ENCODE measurements at regions of chr3 and their contacts with region 1.

Region 1: DNA sequence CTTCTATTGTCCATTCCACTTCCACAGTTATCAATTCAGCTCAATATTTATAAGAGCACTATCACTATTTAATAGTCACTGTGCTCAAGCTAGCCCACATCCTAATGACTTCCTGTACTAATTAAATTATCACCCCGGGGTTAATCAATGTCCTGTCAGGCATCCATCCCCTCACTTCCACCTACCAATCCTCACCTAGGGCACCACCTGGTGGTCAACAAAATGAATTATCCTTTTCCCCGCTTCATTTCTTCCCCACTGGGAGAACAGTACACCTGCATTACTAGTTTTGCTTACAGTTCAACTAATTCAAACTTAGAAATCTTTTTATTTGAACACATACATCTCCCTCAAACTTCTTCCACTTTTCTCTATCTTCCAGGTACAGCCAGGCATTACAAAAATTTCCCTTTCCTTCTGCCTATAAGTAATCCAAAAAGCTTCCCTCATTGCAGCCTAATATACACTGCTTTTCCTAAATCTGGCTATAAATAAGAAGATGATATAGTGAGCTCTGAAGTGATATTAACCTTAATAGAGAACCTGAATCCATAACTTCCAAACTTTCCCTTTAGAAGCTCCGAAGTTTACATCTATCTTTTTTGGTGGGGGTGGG is 68.5 kb downstream of the TMCC1 start:
- DNase-seq: peak in 1 of 2 donors; percentile 42
- ATAC-seq: peak in 2 of 8 donors; percentile 27 to 51
- H3K4me3 ChIP-seq: no peak overlapping the region
- H3K27ac ChIP-seq: no peak overlapping the region
- H3K4me1 ChIP-seq: peaks cover 0 to 48% (median 10%) of the 10 kb centered on the region in 9 donors
- H3K27me3 ChIP-seq: no peaks in the 10 kb centered on the region
- CTCF ChIP-seq: peak; percentile 37 to 80 (median 72)

Region 2: GRCh38 chr3:129343643-129344332 is 481.2 kb before region 1 on chr3:
- intact Hi-C with region 1: loop called in 1 of 10 experiments (anchors 5 kb)
- DNase-seq: peak in 1 of 2 donors; percentile 56
- ATAC-seq: peak; percentile 48 to 88 (median 78)
- H3K4me3 ChIP-seq: peak overlapping the region; percentile 7 to 47 (median 36)
- H3K27ac ChIP-seq: no peak overlapping the region
- H3K4me1 ChIP-seq: peaks cover 2 to 39% (median 24%) of the 10 kb centered on the region in 9 donors
- H3K27me3 ChIP-seq: peaks cover 0 to 11% (median 0%) of the 10 kb centered on the region in 7 donors
- CTCF ChIP-seq: peak; percentile 3 to 73 (median 58)

Region 3: DNA sequence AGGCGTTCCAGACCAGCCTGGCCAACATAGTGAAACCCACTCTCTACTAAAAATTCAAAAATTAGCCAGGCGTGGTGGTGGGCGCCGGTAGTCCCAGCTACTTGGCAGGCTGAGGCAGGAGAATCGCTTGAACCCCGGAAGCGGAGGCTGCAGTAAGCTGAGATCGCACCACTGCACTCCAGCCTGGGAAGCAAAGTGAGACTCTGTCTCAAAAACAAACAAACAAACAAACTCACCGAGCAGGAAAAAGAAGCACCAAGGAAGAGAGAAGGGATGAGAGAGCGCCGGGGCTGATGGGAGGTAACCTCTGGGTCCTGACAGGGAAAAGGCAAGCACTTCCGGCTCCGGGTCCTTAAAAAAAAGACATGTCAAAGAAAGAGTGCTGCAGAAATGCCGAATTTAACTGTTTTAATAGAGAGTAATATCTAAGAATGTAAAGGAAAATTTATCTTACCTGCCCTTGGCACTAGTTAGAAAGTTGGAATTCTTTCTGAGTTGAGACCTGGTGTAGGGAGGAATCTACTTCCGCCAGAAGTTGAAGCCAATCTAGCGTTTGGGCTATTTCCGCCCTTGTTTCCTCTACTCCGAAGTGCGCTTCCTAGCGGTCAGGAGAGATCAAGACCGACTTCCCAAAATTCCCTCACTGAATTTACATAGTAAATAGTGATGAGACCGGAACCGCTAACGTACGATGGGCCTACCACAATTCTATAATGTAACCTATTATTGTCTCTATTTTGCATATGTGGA is 425.7 kb before region 1 on chr3:
- intact Hi-C with region 1: loop called in 1 of 10 experiments (anchors 10 kb)
- DNase-seq: peak; percentile 52 to 92
- ATAC-seq: peak; percentile 86 to 97 (median 92)
- H3K4me3 ChIP-seq: peak overlapping the region; percentile 67 to 98 (median 85)
- H3K27ac ChIP-seq: peak overlapping the region; percentile 82 to 95 (median 90)
- H3K4me1 ChIP-seq: peaks cover 0 to 44% (median 14%) of the 10 kb centered on the region in 9 donors
- H3K27me3 ChIP-seq: no peaks in the 10 kb centered on the region
- CTCF ChIP-seq: peak; percentile 67 to 93 (median 82)

Region 4: DNA sequence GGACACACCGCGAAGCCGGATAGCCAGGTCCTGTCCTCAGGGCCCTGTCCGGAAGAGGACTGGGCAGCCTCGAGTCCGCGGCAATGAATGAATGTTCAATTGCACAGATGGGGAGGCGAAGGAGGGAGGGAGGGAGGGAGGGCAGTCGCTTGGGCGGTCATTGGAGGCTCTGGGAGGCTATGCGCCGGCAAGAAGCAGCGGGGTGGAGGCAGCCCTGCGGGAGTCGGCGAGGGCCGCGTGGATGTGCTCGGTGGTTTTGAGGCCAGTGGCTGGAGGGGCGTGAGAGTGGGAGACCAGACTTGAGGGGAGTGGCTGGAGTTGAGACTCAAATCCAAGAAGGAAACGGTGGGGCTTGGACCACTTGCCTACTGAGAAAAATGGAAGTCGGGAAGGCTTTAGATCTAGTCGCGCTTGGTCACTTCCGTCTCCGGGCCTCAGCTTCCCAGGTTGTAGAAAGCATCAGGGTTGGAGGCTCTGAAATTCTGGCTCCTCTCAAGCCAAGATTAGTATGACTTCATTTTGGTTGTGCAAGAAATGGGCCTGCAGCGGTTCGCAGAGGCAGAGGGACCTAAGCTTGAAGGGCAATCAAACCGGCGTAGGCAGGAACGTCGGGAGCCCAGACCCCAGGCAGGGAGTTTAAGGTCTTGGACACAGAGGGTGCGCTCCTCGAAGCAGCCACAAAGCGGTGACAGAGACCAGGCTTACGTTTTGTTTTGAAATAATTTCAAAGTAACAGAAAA is 197.4 kb before region 1 on chr3:
- intact Hi-C with region 1: loop called in 7 of 10 experiments (anchors 1 to 5 kb)
- DNase-seq: peak; percentile 72 to 77
- ATAC-seq: peak; percentile 19 to 61 (median 55)
- H3K4me3 ChIP-seq: peak overlapping the region; percentile 26 to 79 (median 66)
- H3K27ac ChIP-seq: peak overlapping the region; percentile 95 to 100 (median 99)
- H3K4me1 ChIP-seq: peaks cover 30 to 64% (median 53%) of the 10 kb centered on the region in 9 donors
- H3K27me3 ChIP-seq: no peaks in the 10 kb centered on the region
- CTCF ChIP-seq: peak; percentile 67 to 93 (median 79)

Region 5: GRCh38 chr3:129645290-129645689 is 179.7 kb before region 1 on chr3:
- intact Hi-C with region 1: loop called in 9 of 10 experiments (anchors 2 to 5 kb)
- DNase-seq: no peak
- ATAC-seq: peak in 1 of 8 donors; percentile 17
- H3K4me3 ChIP-seq: no peak overlapping the region
- H3K27ac ChIP-seq: no peak overlapping the region
- H3K4me1 ChIP-seq: peaks cover 0 to 9% (median 3%) of the 10 kb centered on the region in 9 donors
- H3K27me3 ChIP-seq: no peaks in the 10 kb centered on the region
- CTCF ChIP-seq: no peak

Region 6: GRCh38 chr3:129934234-129935123 is 109.4 kb after region 1 on chr3:
- intact Hi-C with region 1: loop called in 7 of 10 experiments (anchors 2 to 10 kb)
- DNase-seq: no peak
- ATAC-seq: peak in 6 of 8 donors; percentile 56 to 65 (median 61)
- H3K4me3 ChIP-seq: peak overlapping the region in 5 of 10 donors; percentile 12 to 44 (median 32)
- H3K27ac ChIP-seq: no peak overlapping the region
- H3K4me1 ChIP-seq: peaks cover 0 to 5% (median 0%) of the 10 kb centered on the region in 9 donors
- H3K27me3 ChIP-seq: peaks cover 0 to 5% (median 0%) of the 10 kb centered on the region in 7 donors
- CTCF ChIP-seq: peak; percentile 85 to 94 (median 92)